ENCODE measurements at regions of chr6 and their contacts with region 1.

Region 1: DNA sequence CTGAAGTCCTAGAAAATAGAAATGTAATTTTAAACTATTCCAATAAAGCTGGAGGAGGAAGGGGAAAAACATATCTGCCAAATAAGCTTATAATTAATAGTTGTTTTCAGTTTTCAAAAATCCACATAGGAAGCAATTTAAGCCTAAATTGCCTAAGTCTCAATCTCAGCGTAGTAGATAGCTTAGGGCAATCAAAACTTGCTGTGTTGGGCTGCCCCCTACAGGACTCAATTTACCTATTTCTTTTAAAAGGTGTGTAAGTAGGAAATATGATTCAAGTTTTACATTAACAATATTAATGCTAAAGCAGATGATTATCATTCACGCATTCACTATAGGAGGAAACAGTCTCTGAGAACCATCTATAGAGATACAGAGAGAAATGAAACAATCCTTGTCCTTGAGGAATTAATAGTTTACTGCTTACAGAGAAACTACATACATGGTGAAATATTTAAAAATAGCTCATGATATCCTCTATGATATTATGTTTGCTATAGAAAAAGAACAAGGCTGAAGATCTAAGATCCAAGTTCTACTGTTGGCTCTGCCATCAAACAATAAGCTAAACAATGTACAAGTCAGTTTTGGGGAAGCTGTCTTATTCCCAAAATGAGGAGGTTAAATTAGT is 102.1 kb downstream of the ATG5 start:
- DNase-seq: peak; percentile 83
- H3K4me3 Mint-ChIP-seq: no peak overlapping the region
- H3K27ac Mint-ChIP-seq: no peak overlapping the region
- H3K4me1 Mint-ChIP-seq: peaks cover 14% of the 10 kb centered on the region
- H3K27me3 Mint-ChIP-seq: no peaks in the 10 kb centered on the region

Region 2: DNA sequence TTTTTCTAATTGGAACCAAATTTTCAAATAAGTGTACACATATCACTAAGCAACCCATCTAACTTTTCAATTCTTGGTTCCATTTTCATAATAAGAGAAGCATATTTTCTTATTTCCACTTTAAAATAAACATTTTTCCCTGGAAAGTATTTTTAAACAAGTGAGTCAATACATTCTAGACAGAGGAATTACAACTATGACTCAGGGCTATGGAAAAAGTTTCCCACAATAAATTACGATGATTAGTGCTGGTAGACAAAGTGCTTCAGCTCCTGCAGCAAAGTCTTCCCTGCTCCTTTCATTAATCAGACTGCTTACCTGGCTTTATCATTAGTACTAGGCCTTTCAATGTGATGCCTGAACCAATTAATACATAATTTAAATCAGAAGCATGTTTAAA is 1686.2 kb before region 1 on chr6:
- CTCF ChIA-PET with region 1: no interaction called
- POLR2A ChIA-PET with region 1: no interaction called
- DNase-seq: no peak
- H3K4me3 Mint-ChIP-seq: no peak overlapping the region
- H3K27ac Mint-ChIP-seq: no peak overlapping the region
- H3K4me1 Mint-ChIP-seq: no peaks in the 10 kb centered on the region
- H3K27me3 Mint-ChIP-seq: peaks cover 7% of the 10 kb centered on the region

Region 3: GRCh38 chr6:106085984-106086813 is 137.2 kb before region 1 on chr6 and contains the start of gene PRDM1:
- CTCF ChIA-PET with region 1: interaction called, 14 read pairs
- POLR2A ChIA-PET with region 1: no interaction called
- DNase-seq: peak; percentile 81
- H3K4me3 Mint-ChIP-seq: peak within 1 kb of the TSS; percentile 80
- H3K27ac Mint-ChIP-seq: peak within 1 kb of the TSS; percentile 72
- H3K4me1 Mint-ChIP-seq: peaks cover 88% of the 10 kb centered on the region
- H3K27me3 Mint-ChIP-seq: peaks cover 36% of the 10 kb centered on the region
- total RNA-seq, gene PRDM1: 27.1 to 30.8 TPM

Region 4: GRCh38 chr6:106092279-106092678 is 131.1 kb before region 1 on chr6:
- CTCF ChIA-PET with region 1: interaction called, 14 read pairs
- POLR2A ChIA-PET with region 1: interaction called, 3 read pairs
- DNase-seq: no peak
- H3K4me3 Mint-ChIP-seq: no peak overlapping the region
- H3K27ac Mint-ChIP-seq: no peak overlapping the region
- H3K4me1 Mint-ChIP-seq: peaks cover 78% of the 10 kb centered on the region
- H3K27me3 Mint-ChIP-seq: peaks cover 29% of the 10 kb centered on the region

Region 5: DNA sequence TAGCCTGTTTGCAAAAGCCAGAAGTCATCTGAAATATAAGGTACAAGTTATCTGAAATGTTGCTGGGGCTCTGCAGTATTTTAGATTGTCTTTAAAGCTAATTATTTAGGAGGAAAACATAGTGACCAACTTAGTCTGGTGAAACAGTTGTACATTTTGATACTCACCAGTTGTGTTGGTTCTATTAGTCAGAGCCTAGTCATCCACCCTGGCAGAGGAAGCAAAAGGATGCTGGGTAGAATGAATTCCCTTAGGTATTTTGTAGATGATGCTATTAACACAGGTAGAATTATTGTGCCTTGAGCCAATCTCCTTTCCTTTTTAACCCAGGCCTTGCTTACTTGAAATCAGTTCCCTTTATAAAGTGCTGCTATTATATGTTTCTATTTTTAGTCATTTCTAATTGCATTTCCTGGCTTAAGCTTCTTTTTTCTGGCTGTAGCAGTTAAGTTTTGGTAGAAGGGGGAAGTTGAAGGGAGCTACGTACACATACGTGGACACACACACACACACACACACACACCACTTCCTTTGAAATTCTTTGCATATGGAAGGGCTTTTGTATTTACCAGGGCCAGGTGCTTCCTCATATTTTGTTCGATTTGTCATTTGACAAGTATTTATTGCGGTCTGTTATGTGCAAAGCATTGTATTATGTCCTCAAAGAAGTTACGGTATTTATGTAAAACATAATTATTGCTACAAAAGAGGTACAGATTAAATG is 323.4 kb after region 1 on chr6:
- CTCF ChIA-PET with region 1: no interaction called
- POLR2A ChIA-PET with region 1: no interaction called
- DNase-seq: no peak
- H3K4me3 Mint-ChIP-seq: no peak overlapping the region
- H3K27ac Mint-ChIP-seq: peak overlapping the region; percentile 11
- H3K4me1 Mint-ChIP-seq: peaks cover 31% of the 10 kb centered on the region
- H3K27me3 Mint-ChIP-seq: no peaks in the 10 kb centered on the region